ENCODE measurements at regions of chr15 and their contacts with region 1.

Region 1: GRCh38 chr15:40044717-40045571 is 6.0 kb upstream of the SRP14 start:
- DNase-seq: peak; percentile 77
- ATAC-seq: peak; percentile 87
- H3K4me3 Mint-ChIP-seq: peak overlapping the region; percentile 46
- H3K27ac Mint-ChIP-seq: peak overlapping the region; percentile 93
- H3K4me1 Mint-ChIP-seq: peaks cover 64% of the 10 kb centered on the region
- H3K27me3 Mint-ChIP-seq: no peaks in the 10 kb centered on the region
- CTCF ChIP-seq: peak; percentile 58

Region 2: DNA sequence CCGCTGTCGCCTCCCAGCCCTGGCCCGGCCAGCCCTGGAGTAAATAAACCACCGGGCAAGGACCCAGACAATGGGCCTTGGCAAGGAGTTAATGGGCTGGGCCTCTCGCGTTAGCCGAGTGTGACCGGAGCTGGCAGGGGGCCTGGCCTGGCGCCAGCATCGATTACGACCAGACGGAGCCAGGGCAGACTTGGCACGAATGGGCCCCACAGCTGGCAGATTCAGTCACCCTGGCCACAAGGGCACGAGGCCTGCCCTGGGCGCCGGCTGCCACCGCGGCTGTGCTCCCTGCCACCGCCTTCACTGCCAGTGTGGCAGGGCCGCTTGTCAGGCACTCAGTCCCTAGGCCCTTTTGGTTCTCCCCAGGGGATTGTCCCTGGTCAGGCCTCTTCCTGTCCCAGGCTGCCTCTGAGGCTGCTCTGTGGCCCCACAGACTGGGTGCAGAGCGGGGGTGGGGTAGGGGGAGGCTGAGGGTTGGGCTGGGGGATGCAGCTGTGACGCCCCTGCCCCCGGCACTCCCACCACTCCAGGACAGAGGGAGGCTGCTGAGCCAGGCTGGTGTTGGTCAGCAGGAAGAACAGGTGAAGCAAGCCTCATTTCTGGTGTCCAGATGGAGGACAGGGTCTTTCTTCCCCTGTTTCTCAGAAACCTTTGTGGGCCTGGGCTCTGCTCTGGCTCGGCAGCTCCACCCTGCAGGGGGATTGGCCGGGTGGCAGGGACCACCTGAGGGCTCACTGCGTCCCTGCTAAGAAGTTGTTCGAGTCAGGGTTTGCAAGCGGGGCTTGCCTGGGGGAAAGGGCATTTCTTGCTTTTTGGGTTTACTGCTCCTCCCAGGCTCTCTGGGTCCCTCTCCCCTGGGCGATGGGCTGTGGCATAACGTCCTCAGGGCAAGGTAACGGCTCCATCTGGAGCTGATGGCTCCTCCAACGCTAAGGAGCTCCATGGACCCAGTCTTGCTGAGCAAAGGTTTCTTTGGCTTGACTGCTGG is 24.5 kb after region 1 on chr15:
- CTCF ChIA-PET with region 1: interaction called, 13 read pairs
- POLR2A ChIA-PET with region 1: interaction called, 56 read pairs
- intact Hi-C with region 1: loop called (anchors 1 kb)
- DNase-seq: peak; percentile 59
- ATAC-seq: peak; percentile 76
- H3K4me3 Mint-ChIP-seq: peak overlapping the region; percentile 60
- H3K27ac Mint-ChIP-seq: peak overlapping the region; percentile 83
- H3K4me1 Mint-ChIP-seq: peaks cover 48% of the 10 kb centered on the region
- H3K27me3 Mint-ChIP-seq: no peaks in the 10 kb centered on the region
- CTCF ChIP-seq: no peak

Region 3: DNA sequence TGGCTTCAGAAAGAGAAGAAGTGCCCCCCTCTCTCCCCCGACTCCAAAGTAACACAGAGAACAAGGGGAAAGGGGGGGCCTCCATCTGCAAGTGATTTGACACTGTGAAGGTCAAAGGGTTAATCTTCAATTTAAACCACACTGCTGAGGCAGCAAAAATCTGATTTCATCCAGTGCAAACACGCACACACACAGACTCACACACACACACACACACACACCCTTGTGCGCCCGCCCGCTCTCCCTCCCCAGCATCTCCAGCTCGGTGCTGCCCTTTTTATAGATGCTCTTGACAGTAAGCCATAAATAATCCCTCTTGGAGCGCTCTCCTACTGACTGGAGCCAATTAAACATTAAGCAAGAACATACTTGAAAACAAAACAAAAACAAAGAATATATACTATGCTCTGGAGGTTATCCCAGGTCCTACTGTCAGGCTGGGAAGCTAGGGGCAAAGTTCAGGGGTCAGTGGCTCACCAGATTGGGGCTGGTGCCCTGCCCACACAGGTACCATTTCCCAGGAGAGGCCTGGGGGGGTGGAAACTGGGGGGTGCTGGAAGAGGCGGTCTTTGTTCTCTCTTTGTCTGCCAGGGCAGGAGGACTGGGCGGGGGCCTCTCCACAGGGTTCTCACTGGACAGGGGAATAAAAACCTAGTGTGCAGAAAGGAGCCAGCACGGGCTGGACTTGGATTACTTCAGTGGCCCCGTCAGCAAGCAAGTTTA is 47.5 kb after region 1 on chr15:
- CTCF ChIA-PET with region 1: interaction called, 519 read pairs
- POLR2A ChIA-PET with region 1: interaction called, 1,329 read pairs
- intact Hi-C with region 1: no loop called
- DNase-seq: no peak
- ATAC-seq: no peak
- H3K4me3 Mint-ChIP-seq: peak overlapping the region; percentile 48
- H3K27ac Mint-ChIP-seq: peak overlapping the region; percentile 99
- H3K4me1 Mint-ChIP-seq: peaks cover 72% of the 10 kb centered on the region
- H3K27me3 Mint-ChIP-seq: no peaks in the 10 kb centered on the region
- CTCF ChIP-seq: no peak

Region 4: GRCh38 chr15:40115670-40116093 is 70.7 kb after region 1 on chr15:
- CTCF ChIA-PET with region 1: interaction called, 519 read pairs
- POLR2A ChIA-PET with region 1: interaction called, 1,329 read pairs
- intact Hi-C with region 1: no loop called
- DNase-seq: peak; percentile 67
- ATAC-seq: peak; percentile 94
- H3K4me3 Mint-ChIP-seq: peak overlapping the region; percentile 61
- H3K27ac Mint-ChIP-seq: peak overlapping the region; percentile 98
- H3K4me1 Mint-ChIP-seq: peaks cover 42% of the 10 kb centered on the region
- H3K27me3 Mint-ChIP-seq: no peaks in the 10 kb centered on the region
- CTCF ChIP-seq: no peak

Region 5: DNA sequence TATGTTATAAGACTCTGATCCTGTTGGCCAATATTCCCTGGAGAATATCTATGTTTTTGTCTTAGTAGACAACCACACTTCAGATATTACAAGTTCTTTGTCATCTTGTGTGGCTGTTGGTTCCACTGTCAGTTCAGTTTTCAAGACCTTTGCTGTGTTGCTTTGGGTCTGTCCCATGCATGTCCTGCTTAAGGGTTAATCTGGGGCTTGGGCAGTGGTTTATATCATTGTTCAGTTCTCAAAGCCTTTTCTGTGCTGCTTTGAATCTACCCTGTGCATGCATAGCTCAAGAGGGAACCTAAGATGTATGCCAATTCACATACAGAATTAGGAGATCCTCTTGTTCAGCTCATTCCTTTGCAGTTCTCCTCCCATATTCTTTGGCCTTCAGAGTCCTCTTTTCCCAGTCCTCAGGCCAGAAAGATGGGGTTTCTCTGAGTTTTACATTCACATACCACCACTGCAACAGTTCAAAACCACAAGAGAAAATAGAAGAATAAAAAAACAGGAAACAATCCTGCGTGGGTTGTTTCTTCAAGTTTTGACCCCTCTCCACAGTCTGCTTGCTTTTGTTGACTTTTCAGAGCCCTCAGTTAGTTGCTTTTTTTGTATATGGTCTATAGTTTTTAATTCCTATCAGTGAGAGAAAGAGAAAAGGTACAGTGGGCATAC is 137.6 kb after region 1 on chr15:
- CTCF ChIA-PET with region 1: interaction called, 7 read pairs
- POLR2A ChIA-PET with region 1: interaction called, 8 read pairs
- intact Hi-C with region 1: loop called (anchors 1 kb)
- DNase-seq: no peak
- ATAC-seq: no peak
- H3K4me3 Mint-ChIP-seq: peak overlapping the region; percentile 62
- H3K27ac Mint-ChIP-seq: peak overlapping the region; percentile 86
- H3K4me1 Mint-ChIP-seq: peaks cover 41% of the 10 kb centered on the region
- H3K27me3 Mint-ChIP-seq: no peaks in the 10 kb centered on the region
- CTCF ChIP-seq: no peak

Region 6: GRCh38 chr15:40338041-40338657 is 293.2 kb after region 1 on chr15:
- CTCF ChIA-PET with region 1: interaction called, 14 read pairs
- POLR2A ChIA-PET with region 1: interaction called, 3 read pairs
- intact Hi-C with region 1: no loop called
- DNase-seq: peak; percentile 67
- ATAC-seq: peak; percentile 96
- H3K4me3 Mint-ChIP-seq: no peak overlapping the region
- H3K27ac Mint-ChIP-seq: no peak overlapping the region
- H3K4me1 Mint-ChIP-seq: peaks cover 24% of the 10 kb centered on the region
- H3K27me3 Mint-ChIP-seq: no peaks in the 10 kb centered on the region
- CTCF ChIP-seq: peak; percentile 17

Region 7: GRCh38 chr15:40382580-40383456 is 337.9 kb after region 1 on chr15 and contains the start of gene KNSTRN:
- CTCF ChIA-PET with region 1: no interaction called
- POLR2A ChIA-PET with region 1: no interaction called
- intact Hi-C with region 1: no loop called
- DNase-seq: peak; percentile 83
- ATAC-seq: peak; percentile 99
- H3K4me3 Mint-ChIP-seq: peak within 1 kb of the TSS; percentile 96
- H3K27ac Mint-ChIP-seq: peak within 1 kb of the TSS; percentile 73
- H3K4me1 Mint-ChIP-seq: peaks cover 12% of the 10 kb centered on the region
- H3K27me3 Mint-ChIP-seq: no peaks in the 10 kb centered on the region
- CTCF ChIP-seq: no peak
- total RNA-seq, gene KNSTRN: 11.5 and 13.4 TPM in 2 replicates